Sigmoid colon (tissue), 7 donors: ENCODE measurements at regions of chr16 and their contacts with region 1.

Region 1: DNA sequence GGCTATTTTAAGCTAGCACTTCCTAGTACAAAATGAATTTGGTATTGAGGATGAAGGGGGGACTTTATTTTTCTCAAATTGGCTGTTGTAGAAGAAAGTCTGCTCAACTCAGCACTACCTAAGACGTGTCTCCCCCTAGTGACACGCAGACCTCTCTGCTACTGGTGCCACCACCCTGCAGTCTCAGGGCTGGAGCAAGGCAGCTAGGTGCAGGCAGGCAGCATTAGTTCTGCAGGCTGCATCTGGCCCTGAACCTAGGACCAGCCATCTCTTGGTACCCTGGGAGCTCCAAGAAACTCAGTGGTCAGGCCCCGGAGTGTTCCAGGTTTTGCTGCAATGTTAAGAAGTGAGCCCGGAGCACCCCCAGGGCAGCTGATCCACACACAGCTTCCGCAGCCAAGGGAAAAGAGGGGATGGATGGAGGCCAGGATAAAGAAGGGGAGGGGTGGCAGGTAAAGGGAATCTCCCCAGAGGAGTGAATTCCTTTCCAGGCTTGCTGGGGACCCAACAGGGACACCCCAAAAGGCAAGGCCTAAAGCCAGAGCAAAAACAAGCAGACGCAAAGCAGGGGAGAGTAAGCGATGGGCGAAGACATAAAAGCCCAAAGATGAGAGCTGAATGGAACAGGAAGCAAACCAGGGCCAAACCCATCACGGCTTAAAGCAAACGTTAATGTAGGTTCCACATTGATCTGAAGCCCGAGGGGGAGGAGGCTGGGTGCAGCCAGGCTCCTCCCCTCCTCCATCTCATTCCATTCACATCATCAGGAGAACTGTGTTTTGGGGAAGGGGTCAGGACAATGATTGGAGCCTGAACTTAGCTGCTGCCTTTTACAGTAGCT is 200.5 kb downstream of the ZFHX3 start:
- DNase-seq: no peak
- H3K4me3 ChIP-seq: no peak overlapping the region
- H3K27ac ChIP-seq: peak overlapping the region; percentile 56 to 79 (median 68)
- H3K4me1 ChIP-seq: peaks cover 0 to 53% (median 39%) of the 10 kb centered on the region in 4 donors
- H3K27me3 ChIP-seq: no peaks in the 10 kb centered on the region
- CTCF ChIP-seq: peak in 2 of 4 experiments; percentile 4 to 20
- EP300 ChIP-seq: no peak
- POLR2A ChIP-seq: no peak

Region 2: DNA sequence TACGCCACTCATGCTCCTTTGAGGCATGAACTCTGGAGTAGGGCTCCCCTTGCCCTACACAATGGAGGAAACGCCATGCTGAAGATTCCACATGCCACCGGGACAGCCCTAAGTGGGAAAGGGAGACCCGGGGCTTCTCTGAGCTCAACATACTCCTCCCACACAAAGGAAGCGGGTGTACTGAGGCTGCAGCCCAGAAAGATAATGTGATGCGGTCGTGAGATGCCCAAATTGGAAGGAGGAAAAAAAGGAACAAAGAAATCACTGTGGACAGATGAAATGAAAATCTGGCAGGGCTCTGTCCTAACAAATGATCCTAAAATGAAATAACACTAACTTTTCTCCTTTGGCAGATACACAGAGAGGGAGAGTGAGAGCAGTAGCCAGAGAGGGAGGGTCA is 18.4 kb after region 1 on chr16:
- intact Hi-C with region 1: no loop called
- DNase-seq: no peak
- H3K4me3 ChIP-seq: no peak overlapping the region
- H3K27ac ChIP-seq: no peak overlapping the region
- H3K4me1 ChIP-seq: no peaks in the 10 kb centered on the region
- H3K27me3 ChIP-seq: no peaks in the 10 kb centered on the region
- CTCF ChIP-seq: no peak
- EP300 ChIP-seq: no peak
- POLR2A ChIP-seq: no peak

Region 3: GRCh38 chr16:72915331-72915730 is 67.9 kb after region 1 on chr16:
- intact Hi-C with region 1: loop called (anchors 5 kb)
- DNase-seq: no peak
- H3K4me3 ChIP-seq: no peak overlapping the region
- H3K27ac ChIP-seq: no peak overlapping the region
- H3K4me1 ChIP-seq: peaks cover 0 to 15% (median 4%) of the 10 kb centered on the region in 4 donors
- H3K27me3 ChIP-seq: no peaks in the 10 kb centered on the region
- CTCF ChIP-seq: no peak
- EP300 ChIP-seq: no peak
- POLR2A ChIP-seq: no peak

Region 4: DNA sequence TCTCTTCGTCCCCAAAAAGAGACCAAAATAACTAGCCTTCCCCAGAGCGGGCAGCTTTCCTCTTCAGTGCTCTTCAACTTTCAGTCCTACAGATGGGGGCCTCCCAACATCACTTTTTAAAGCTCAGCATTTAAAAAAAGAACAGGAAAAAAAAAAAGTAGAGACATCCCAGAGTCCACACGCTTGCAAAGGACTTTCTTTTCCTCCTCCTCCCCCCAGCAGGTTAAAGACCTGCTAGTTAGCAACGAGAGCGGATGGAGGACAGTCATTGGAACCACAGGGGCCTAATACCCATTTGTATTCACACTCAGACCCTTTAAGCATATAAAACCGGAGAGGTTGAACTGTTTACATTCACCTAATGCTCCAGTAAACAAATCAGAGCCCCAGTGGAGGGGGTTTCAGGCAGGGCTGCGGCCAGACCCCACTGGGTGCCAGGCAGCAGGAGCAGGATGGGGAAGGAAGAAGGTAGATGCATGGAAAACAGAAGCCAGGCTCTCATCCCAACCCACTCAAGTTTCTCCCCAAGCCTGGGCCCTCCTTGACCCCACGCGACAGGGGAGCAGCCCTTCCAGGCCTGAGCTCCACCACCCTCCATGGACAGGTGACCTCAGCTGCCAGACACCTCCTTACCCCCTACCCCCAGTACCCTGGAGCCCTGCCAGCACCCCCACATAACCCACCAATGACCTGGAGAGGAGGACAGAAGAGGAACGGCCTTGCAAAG is 185.3 kb after region 1 on chr16:
- intact Hi-C with region 1: no loop called
- DNase-seq: no peak
- H3K4me3 ChIP-seq: no peak overlapping the region
- H3K27ac ChIP-seq: peak overlapping the region in 3 of 4 donors; percentile 15 to 51 (median 31)
- H3K4me1 ChIP-seq: peaks cover 0 to 91% (median 70%) of the 10 kb centered on the region in 4 donors
- H3K27me3 ChIP-seq: no peaks in the 10 kb centered on the region
- CTCF ChIP-seq: no peak
- EP300 ChIP-seq: no peak
- POLR2A ChIP-seq: no peak

Region 5: DNA sequence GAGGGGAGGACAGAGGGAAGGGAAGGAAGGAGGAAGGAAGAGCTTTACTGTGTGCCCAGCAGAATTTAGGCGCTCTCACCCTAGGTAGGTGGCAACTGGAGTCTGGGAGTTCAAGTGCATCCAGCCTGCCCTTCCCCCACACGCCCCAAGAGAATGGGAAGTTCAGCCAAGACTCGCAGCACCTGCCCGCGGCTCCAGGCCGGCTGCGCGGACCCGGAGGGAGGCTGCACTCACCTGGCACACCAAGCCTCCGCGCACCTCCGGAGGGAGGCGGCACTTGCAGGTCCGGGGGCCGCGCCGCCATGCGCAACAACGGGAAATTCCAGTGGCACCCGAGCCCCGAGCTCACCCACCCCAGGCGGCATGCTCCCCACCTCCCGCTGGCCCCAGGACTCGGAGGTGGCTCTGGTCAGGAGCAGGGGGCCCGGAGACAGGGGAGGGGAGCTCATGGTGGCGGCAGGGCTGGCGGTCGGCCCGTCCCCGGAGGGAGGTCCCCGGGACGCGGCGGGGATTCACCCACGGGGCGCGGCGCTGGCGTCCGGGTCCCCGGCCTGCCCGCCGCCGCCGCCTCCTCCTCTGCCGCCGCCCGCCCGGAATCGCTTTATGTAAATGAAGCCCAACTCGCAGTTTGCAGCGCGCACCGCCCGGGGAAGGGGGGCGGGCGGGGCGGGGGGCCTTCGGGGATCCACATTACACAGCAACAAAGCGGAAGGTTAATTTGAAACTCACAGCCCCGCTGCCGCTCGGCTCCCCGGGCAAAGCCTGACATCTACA is 200.3 kb after region 1 on chr16 and contains the start of gene ZFHX3:
- intact Hi-C with region 1: loop called (anchors 5 kb)
- DNase-seq: peak; percentile 90
- H3K4me3 ChIP-seq: peak within 1 kb of the TSS; percentile 78 to 90 (median 84)
- H3K27ac ChIP-seq: peak within 1 kb of the TSS; percentile 94 to 99 (median 97)
- H3K4me1 ChIP-seq: peaks cover 3 to 92% (median 88%) of the 10 kb centered on the region in 4 donors
- H3K27me3 ChIP-seq: no peaks in the 10 kb centered on the region
- CTCF ChIP-seq: no peak
- EP300 ChIP-seq: no peak
- POLR2A ChIP-seq: peak in 1 of 2 donors; percentile 20
- total RNA-seq, gene ZFHX3: 17.8 to 38.8 (median 19.1) TPM